Naive thymus-derived CD8-positive, alpha-beta T cell (primary cell): ENCODE measurements at regions of chr16 and their contacts with region 1.

Region 1: DNA sequence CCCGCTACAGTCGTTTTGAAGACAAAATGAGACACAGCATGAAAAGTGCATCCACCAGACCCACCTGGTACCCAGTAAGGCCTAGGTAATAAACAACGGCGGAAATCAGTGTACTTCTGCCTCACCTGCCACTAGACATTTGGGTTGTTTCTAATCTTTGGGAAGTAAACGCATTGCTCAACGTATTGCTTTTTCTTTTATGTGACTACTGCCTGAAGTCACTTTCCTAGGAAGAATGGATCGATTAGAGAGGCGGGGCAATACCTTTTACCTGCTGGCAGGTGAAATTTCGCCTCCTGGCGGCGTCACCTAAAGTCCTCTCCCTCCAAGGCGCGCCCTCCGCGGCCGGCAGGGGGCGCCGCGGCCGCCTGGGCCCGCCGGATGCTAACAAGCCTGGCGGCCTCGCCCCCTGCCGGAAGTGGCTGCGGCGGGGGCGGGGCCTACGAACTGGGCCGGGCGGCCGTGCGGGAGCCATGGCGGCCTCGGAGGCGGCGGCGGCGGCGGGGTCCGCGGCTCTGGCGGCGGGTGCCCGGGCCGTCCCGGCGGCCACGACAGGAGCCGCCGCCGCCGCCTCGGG is at the start of gene ATMIN:
- DNase-seq: peak; percentile 79 to 98 (median 88)
- ATAC-seq: peak; percentile 93 to 97
- H3K4me3 Mint-ChIP-seq: peak within 1 kb of the TSS; percentile 78 to 90 (median 85)
- H3K27ac Mint-ChIP-seq: peak within 1 kb of the TSS in 9 of 10 donors; percentile 51 to 92 (median 83)
- H3K4me1 Mint-ChIP-seq: peaks cover 16 to 36% (median 28%) of the 10 kb centered on the region in 4 donors
- H3K27me3 Mint-ChIP-seq: no peaks in the 10 kb centered on the region
- polyA plus RNA-seq, gene ATMIN: 21.6 to 41.4 (median 27.7) TPM

Region 2: DNA sequence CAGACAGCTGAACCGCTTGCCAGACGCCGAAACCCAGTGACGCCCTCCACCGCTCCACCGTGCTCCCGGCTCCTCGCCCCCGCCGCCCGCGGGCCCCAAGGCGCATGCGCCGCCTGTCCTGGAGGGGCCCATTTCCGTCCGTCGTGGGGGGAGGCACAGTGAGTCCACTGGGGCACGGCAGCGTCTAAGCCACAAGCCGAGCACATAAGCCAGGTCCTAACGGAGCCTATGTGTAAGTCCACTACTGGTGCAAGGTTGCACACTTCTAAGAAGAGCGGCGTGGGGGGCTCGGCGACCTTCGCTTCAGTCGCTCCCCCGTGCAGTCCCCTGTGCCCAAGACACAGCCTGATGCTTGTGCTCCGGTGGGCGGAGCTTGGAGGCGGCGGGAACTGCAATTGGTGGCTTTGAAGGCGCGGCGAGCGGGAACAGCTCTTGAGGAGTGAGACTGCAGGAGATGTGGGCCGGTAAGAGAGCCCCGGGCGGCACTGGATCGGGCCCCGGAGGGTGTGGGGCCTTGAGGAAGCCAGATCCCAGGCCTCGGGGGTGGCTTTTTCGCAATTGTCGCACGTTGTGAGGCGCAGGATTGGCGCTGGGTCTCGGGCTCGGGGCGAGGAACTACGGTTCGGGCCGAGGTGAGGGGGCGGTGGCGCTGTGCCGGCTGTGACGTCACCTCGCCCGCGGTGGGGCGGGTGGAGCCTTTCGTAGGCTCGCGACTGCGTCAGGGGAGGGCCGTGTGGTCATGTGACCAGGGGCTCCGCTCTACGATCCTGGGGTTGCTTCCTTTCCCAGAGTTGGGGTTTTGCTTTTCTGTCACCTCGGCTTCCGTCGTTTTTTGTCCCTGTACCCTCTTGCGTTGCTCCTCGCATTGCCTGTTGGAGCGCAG is 28.4 kb before region 1 on chr16 and contains the starts of genes CENPN and CMC2:
- POLR2A ChIA-PET with region 1: interaction called, 34 read pairs
- DNase-seq: peak; percentile 94 to 100 (median 98)
- ATAC-seq: peak; percentile 83 to 85
- H3K4me3 Mint-ChIP-seq: peak within 1 kb of the TSS; percentile 88 to 100 (median 95)
- H3K27ac Mint-ChIP-seq: peak within 1 kb of the TSS; percentile 94 to 100 (median 100)
- H3K4me1 Mint-ChIP-seq: peaks cover 7 to 53% (median 43%) of the 10 kb centered on the region in 4 donors
- H3K27me3 Mint-ChIP-seq: peaks cover 0 to 3% (median 0%) of the 10 kb centered on the region in 5 donors
- polyA plus RNA-seq, gene CENPN: 1.7 to 4.5 (median 3.0) TPM
- polyA plus RNA-seq, gene CMC2: 78.2 to 84.6 (median 80.2) TPM

Region 3: DNA sequence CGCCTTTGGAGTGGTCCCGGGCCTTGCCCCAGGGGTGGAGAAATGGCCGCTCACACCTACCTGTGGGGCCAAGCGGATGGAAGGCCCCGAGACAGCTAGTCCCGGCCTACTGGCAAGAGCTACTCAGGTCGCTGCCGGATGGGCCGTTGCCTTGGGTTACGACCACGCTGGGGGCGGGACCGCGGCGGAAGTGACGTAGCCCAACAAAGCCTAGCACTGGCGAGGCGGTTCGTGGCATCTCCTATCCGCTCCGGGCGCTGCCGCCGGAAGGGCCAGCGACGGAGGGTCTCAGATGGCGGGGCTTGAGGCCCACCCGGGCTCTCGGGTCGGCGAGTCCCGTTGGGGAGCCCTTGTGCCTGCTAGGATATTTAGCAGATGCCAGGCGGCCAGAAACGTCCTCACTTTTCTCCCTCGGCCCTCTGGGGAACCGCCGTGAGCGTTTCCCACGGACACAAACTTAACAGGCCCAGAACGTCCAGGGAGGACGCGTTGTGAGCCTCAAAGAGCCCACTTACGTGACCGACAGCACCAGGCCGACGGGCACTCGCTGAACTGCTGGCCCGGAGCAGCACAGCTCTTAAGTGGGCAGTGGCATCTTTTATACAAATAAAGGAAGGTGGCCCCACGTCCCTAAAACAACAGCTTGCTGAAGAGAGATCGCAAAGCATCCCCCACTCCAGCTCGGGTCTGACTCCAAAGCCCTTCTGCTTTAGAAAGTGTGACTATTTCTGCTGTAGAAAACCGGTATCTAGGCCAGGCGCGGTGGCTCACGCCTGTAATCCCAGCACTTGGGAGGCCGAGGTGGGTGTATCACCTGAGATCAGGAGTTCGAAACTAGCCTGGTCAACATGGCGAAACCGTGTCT is 41.8 kb after region 1 on chr16 and contains the start of gene C16orf46:
- POLR2A ChIA-PET with region 1: interaction called, 29 read pairs
- DNase-seq: peak in 9 of 10 donors; percentile 91 to 98 (median 96)
- ATAC-seq: peak; percentile 77 to 82
- H3K4me3 Mint-ChIP-seq: peak within 1 kb of the TSS in 3 of 10 donors; percentile 45 to 58 (median 55)
- H3K27ac Mint-ChIP-seq: peak within 1 kb of the TSS in 5 of 10 donors; percentile 24 to 91 (median 43)
- H3K4me1 Mint-ChIP-seq: peaks cover 0 to 8% (median 2%) of the 10 kb centered on the region in 4 donors
- H3K27me3 Mint-ChIP-seq: peaks cover 0 to 2% (median 0%) of the 10 kb centered on the region in 5 donors
- polyA plus RNA-seq, gene C16orf46: 0.14 to 0.23 (median 0.16) TPM